Heart left ventricle (tissue), 16 donors: ENCODE measurements at regions of chr17 and their contacts with region 1.

Region 1: DNA sequence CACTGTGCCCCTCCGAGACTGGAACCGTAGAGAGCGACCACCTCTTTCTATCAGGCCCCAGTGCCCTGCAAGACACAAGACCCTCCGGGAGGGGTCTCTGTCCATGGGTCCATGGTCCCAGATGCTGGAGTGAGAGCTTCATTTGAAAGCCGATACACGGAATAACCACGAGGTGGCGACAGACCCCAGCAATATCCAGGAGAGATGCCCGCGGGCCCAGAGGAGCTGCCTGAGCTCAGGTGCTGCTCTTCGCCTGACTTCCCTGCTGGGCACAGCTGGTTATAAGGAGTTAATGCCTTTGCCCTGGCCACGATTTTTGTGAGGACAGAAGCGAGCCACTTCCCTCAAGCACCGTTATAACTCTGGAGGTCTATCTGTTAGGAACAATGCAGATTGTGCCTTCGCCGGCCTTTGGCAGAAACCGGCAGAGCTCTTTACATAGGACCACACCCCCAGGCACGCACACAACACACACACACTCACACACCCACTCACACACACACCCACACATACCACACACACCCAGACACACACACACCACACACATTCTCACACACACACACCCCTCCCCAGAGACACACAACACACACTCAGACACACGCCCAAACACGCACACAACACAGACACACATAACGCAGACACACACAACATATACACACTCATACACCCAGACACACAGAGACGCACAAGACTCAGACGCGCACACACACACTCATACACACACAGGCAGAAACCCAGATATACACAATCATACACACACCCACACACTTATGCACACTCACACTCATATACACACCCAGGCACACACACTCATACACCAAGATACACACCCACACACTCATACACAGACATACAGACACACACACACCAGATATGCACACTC is 436.4 kb downstream of the SOX9 start:
- DNase-seq: peak in 4 of 5 donors; percentile 27 to 57 (median 40)
- ATAC-seq: peak in 3 of 4 donors; percentile 46 to 74 (median 63)
- H3K4me3 ChIP-seq: no peak overlapping the region
- H3K27ac ChIP-seq: no peak overlapping the region
- H3K4me1 ChIP-seq: no peaks in the 10 kb centered on the region
- H3K27me3 ChIP-seq: peaks cover 0 to 16% (median 0%) of the 10 kb centered on the region in 9 donors
- CTCF ChIP-seq: peak; percentile 49 to 85 (median 74)
- POLR2A ChIP-seq: no peak

Region 2: DNA sequence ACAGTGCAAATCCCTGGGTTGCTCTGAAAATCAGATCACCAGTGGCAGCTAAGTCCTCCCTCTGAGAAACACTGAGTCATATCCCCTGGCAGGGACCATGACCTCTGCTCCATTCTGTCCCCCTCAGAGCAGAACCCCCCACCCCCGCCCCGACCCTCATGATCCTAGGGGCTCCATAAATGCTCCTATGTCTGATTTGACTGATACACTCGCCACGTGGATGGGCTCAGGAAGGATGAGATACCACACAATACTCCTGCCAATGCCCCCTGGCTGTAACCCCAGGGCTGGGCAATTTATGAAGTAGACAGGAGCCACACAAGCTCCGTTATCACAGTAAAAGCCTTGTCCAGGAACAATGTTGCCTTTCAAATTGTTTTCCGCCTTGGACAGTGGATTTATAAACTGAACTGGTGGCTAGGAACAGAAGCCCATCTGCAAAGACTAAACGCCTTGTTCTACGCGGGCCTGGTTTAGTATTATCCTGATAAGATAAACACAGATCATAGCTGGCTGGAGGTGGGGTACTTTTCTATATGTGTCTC is 140.5 kb after region 1 on chr17:
- intact Hi-C with region 1: no loop called
- DNase-seq: no peak
- ATAC-seq: no peak
- H3K4me3 ChIP-seq: no peak overlapping the region
- H3K27ac ChIP-seq: no peak overlapping the region
- H3K4me1 ChIP-seq: no peaks in the 10 kb centered on the region
- H3K27me3 ChIP-seq: no peaks in the 10 kb centered on the region
- CTCF ChIP-seq: no peak
- POLR2A ChIP-seq: no peak

Region 3: GRCh38 chr17:72719578-72720493 is 162.7 kb after region 1 on chr17:
- intact Hi-C with region 1: loop called in 8 of 10 experiments (anchors 2 to 10 kb)
- DNase-seq: no peak
- ATAC-seq: peak in 2 of 4 donors; percentile 29 to 42
- H3K4me3 ChIP-seq: no peak overlapping the region
- H3K27ac ChIP-seq: no peak overlapping the region
- H3K4me1 ChIP-seq: peaks cover 0 to 6% (median 0%) of the 10 kb centered on the region in 12 donors
- H3K27me3 ChIP-seq: no peaks in the 10 kb centered on the region
- CTCF ChIP-seq: no peak
- POLR2A ChIP-seq: no peak

Region 4: GRCh38 chr17:72850410-72851118 is 293.4 kb after region 1 on chr17:
- intact Hi-C with region 1: no loop called
- DNase-seq: no peak
- ATAC-seq: no peak
- H3K4me3 ChIP-seq: no peak overlapping the region
- H3K27ac ChIP-seq: no peak overlapping the region
- H3K4me1 ChIP-seq: no peaks in the 10 kb centered on the region
- H3K27me3 ChIP-seq: no peaks in the 10 kb centered on the region
- CTCF ChIP-seq: no peak
- POLR2A ChIP-seq: no peak

Region 5: DNA sequence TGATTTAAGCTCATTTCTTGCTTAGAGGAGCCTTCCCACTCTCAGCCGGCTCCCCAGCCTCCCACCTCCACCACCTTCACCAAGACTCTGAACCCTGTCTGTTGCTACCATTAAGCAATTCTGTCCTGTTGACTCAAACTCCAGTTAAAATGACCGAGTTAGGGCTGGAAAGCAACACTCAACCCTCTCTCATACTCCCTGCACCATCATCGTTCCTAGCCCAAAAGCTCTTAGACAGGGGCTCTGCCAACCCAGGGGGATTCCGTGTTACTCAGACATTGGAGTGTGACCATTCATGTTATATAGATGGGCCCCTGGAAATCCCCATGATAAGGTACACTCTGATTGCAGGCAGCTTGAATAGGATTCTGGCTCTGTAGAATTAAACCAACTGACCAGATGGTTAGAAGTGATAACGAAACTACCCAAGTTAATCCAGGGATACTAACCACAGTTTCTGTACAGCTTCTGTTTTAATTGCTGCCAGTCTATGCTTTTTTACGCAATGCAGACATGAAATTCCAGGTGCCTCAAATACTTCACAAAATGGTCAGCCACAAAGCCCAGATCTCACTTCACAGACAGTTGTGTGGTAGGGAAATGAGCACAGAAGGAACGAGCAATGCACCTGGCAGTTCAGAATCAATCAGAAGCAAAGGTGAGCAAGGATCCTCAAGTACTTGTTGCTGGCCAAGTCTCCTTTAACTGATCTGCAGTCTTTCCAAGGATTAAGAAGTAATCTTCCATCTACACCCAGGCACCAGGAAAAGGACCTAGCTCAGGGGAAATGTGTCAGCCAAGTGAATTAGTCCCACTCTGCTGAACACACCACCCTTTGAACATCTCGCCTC is 609.8 kb after region 1 on chr17:
- intact Hi-C with region 1: loop called in 2 of 10 experiments (anchors 10 kb)
- DNase-seq: no peak
- ATAC-seq: no peak
- H3K4me3 ChIP-seq: peak overlapping the region in 8 of 12 donors; percentile 47 to 65 (median 58)
- H3K27ac ChIP-seq: peak overlapping the region in 1 of 12 donors; percentile 18
- H3K4me1 ChIP-seq: peaks cover 0 to 30% (median 8%) of the 10 kb centered on the region in 12 donors
- H3K27me3 ChIP-seq: peaks cover 7 to 73% (median 31%) of the 10 kb centered on the region in 9 donors
- CTCF ChIP-seq: no peak
- POLR2A ChIP-seq: no peak